ENCODE measurements at regions of chr5 and their contacts with region 1.

Region 1: GRCh38 chr5:172858990-172859811 is 25.1 kb downstream of the ERGIC1 start:
- DNase-seq: peak; percentile 89
- ATAC-seq: peak; percentile 43
- H3K4me3 ChIP-seq: no peak overlapping the region; a peak in 1 of 4 replicates
- H3K27ac ChIP-seq: peak overlapping the region; percentile 98
- H3K4me1 ChIP-seq: peaks cover 95% of the 10 kb centered on the region
- H3K27me3 ChIP-seq: no peaks in the 10 kb centered on the region
- CTCF ChIP-seq: no peak

Region 2: DNA sequence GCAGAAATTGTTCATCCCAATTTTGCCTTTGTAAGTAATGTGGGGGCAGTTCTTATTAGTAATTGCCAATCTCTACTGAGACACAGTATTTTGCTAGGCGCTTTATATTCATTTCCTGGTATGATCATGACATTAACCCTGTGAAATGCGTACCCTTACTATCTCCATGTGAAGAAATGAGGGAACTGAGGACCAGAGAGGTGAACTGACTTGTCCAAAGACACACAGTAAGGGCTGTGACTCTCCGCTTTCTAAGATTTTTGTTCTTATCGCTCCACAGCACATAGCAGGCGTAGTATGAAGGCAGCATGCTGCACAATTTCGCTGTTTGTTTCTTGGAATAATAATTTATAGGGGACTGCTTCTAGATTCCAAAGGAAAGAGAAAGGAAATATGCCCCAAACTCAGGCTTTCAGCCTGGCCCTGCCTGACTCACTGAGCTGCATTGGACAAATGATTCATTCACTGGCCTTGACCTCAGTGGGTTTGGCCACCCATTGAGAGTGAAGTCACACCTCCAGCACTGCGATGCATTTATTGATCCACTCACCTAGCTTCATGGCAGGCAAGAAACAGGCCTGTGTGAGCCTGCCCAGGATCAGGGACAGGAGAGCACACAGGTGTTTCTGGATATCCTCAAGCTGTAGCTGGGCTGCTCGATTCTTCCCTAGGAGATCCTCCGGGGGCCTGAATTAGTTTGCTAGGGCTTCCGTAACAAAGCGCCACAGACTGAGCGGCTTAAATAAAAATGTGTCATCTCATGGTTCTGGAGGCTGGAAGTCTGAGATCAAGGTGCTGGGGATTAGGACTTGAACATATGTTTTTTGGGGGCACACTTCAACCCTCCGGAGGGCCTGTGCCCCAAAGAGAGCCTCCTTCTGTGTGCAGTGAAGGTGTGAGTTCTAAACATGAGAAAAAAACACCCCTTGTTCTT is 81.1 kb before region 1 on chr5:
- CTCF ChIA-PET with region 1: interaction called, 9 read pairs
- POLR2A ChIA-PET with region 1: interaction called, 4 read pairs
- in situ Hi-C with region 1: no loop called
- intact Hi-C with region 1: loop called (anchors 5 kb)
- DNase-seq: peak; percentile 88
- ATAC-seq: peak; percentile 59
- H3K4me3 ChIP-seq: peak overlapping the region in 1 of 2 experiments; percentile 22; a peak in 2 of 4 replicates
- H3K27ac ChIP-seq: peak overlapping the region; percentile 99
- H3K4me1 ChIP-seq: peaks cover 88% of the 10 kb centered on the region
- H3K27me3 ChIP-seq: no peaks in the 10 kb centered on the region
- CTCF ChIP-seq: no peak

Region 3: GRCh38 chr5:173057062-173057924 is 198.1 kb after region 1 on chr5:
- CTCF ChIA-PET with region 1: no interaction called
- POLR2A ChIA-PET with region 1: no interaction called
- in situ Hi-C with region 1: no loop called
- intact Hi-C with region 1: no loop called
- DNase-seq: peak; percentile 95
- ATAC-seq: peak; percentile 94
- H3K4me3 ChIP-seq: peak overlapping the region; percentile 57 to 77
- H3K27ac ChIP-seq: peak overlapping the region; percentile 94
- H3K4me1 ChIP-seq: peaks cover 14% of the 10 kb centered on the region
- H3K27me3 ChIP-seq: no peaks in the 10 kb centered on the region
- CTCF ChIP-seq: no peak

Measured in Panc1 (cell line).